ENCODE measurements at regions of chr6 and their contacts with region 1.

Region 1: DNA sequence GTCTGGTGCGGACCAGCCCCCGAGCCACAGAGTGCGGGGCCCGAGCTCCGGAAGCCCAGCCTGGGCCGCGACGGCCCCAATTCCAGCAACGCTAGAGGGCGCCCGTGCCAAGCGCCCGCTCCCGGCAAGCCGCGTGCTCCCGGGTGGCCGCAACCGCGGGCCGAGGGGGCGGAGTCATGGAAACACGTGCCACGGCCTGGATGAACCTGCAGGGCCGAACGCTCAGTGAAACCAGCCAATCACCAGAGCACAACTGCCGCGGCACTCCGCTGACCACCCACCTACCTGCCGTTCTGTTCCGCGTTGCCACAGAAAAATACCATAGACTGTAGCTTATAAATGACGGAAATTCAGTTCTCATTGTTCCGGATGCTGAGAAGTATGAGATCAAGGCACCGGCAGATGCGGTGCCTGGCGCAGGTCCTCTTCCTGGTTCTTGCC is 85.7 kb upstream of the FOXC1 start:
- DNase-seq: peak; percentile 58 to 82 (median 75)
- ATAC-seq: peak; percentile 89
- H3K4me3 ChIP-seq: peak overlapping the region; percentile 60
- H3K4me3 Mint-ChIP-seq: peak overlapping the region; percentile 64 to 87 (median 79)
- H3K27ac ChIP-seq: no peak overlapping the region
- H3K27ac Mint-ChIP-seq: peak overlapping the region; percentile 51 to 93 (median 90)
- H3K4me1 ChIP-seq: peaks cover 19 to 50% of the 10 kb centered on the region in 2 donors
- H3K4me1 Mint-ChIP-seq: peaks cover 35 to 58% (median 48%) of the 10 kb centered on the region in 7 donors
- H3K27me3 ChIP-seq: no peaks in the 10 kb centered on the region
- H3K27me3 Mint-ChIP-seq: peaks cover 0 to 16% (median 4%) of the 10 kb centered on the region in 5 donors

Region 2: GRCh38 chr6:1372690-1373089 is 151.4 kb before region 1 on chr6:
- CTCF ChIA-PET with region 1: no interaction called
- POLR2A ChIA-PET with region 1: no interaction called
- intact Hi-C with region 1: no loop called
- DNase-seq: no peak
- ATAC-seq: no peak
- H3K4me3 ChIP-seq: no peak overlapping the region
- H3K4me3 Mint-ChIP-seq: no peak overlapping the region
- H3K27ac ChIP-seq: no peak overlapping the region
- H3K27ac Mint-ChIP-seq: no peak overlapping the region
- H3K4me1 ChIP-seq: no peaks in the 10 kb centered on the region
- H3K4me1 Mint-ChIP-seq: peaks cover 0 to 4% (median 3%) of the 10 kb centered on the region in 7 donors
- H3K27me3 ChIP-seq: no peaks in the 10 kb centered on the region
- H3K27me3 Mint-ChIP-seq: peaks cover 74 to 93% (median 80%) of the 10 kb centered on the region in 5 donors

Region 3: GRCh38 chr6:1482381-1483166 is 41.5 kb before region 1 on chr6:
- CTCF ChIA-PET with region 1: no interaction called
- POLR2A ChIA-PET with region 1: no interaction called
- intact Hi-C with region 1: no loop called
- DNase-seq: no peak
- ATAC-seq: no peak
- H3K4me3 ChIP-seq: no peak overlapping the region
- H3K4me3 Mint-ChIP-seq: no peak overlapping the region
- H3K27ac ChIP-seq: no peak overlapping the region
- H3K27ac Mint-ChIP-seq: no peak overlapping the region
- H3K4me1 ChIP-seq: no peaks in the 10 kb centered on the region
- H3K4me1 Mint-ChIP-seq: no peaks in the 10 kb centered on the region
- H3K27me3 ChIP-seq: no peaks in the 10 kb centered on the region
- H3K27me3 Mint-ChIP-seq: peaks cover 0 to 20% (median 11%) of the 10 kb centered on the region in 5 donors

Region 4: DNA sequence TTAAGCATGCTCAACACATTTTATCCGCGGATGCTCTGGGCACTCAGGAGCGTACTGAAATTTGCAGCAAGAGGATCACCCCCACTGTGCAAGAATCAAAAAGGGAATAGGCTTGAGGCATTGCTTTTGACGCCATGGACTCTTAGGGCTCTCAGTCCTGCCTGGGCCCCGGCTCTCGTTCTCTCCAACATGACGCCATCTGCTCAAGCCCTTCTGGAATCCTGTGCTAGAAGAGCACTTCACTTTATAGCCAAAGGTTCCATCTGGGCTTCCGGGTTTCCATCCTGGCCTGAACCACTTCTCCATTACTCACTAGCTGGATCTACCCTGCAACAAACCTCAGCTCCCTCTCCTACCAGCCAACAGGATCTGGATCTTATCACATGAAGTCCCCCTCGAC is 29.4 kb before region 1 on chr6:
- CTCF ChIA-PET with region 1: no interaction called
- POLR2A ChIA-PET with region 1: no interaction called
- intact Hi-C with region 1: loop called in 1 of 2 experiments (anchors 1 kb)
- DNase-seq: no peak
- ATAC-seq: no peak
- H3K4me3 ChIP-seq: no peak overlapping the region
- H3K4me3 Mint-ChIP-seq: no peak overlapping the region
- H3K27ac ChIP-seq: no peak overlapping the region
- H3K27ac Mint-ChIP-seq: no peak overlapping the region
- H3K4me1 ChIP-seq: no peaks in the 10 kb centered on the region
- H3K4me1 Mint-ChIP-seq: no peaks in the 10 kb centered on the region
- H3K27me3 ChIP-seq: no peaks in the 10 kb centered on the region
- H3K27me3 Mint-ChIP-seq: peaks cover 0 to 13% (median 4%) of the 10 kb centered on the region in 5 donors

Region 5: GRCh38 chr6:1535295-1535694 is 11.2 kb after region 1 on chr6:
- CTCF ChIA-PET with region 1: interaction called, 3 read pairs
- POLR2A ChIA-PET with region 1: interaction called, 13 read pairs
- intact Hi-C with region 1: loop called (anchors 1 kb)
- DNase-seq: peak in 5 of 9 donors; percentile 34 to 46 (median 37)
- ATAC-seq: peak; percentile 73
- H3K4me3 ChIP-seq: no peak overlapping the region
- H3K4me3 Mint-ChIP-seq: peak overlapping the region in 8 of 10 donors; percentile 62 to 79 (median 70)
- H3K27ac ChIP-seq: peak overlapping the region; percentile 35
- H3K27ac Mint-ChIP-seq: peak overlapping the region in 5 of 9 donors; percentile 32 to 85 (median 75)
- H3K4me1 ChIP-seq: peaks cover 20 to 25% of the 10 kb centered on the region in 2 donors
- H3K4me1 Mint-ChIP-seq: peaks cover 12 to 45% (median 20%) of the 10 kb centered on the region in 7 donors
- H3K27me3 ChIP-seq: no peaks in the 10 kb centered on the region
- H3K27me3 Mint-ChIP-seq: no peaks in the 10 kb centered on the region

Region 6: GRCh38 chr6:1554476-1555310 is 30.6 kb after region 1 on chr6:
- CTCF ChIA-PET with region 1: interaction called, 50 read pairs
- POLR2A ChIA-PET with region 1: interaction called, 5 read pairs
- intact Hi-C with region 1: loop called (anchors 1 kb)
- DNase-seq: peak; percentile 45 to 81 (median 73)
- ATAC-seq: peak; percentile 94
- H3K4me3 ChIP-seq: peak overlapping the region; percentile 64
- H3K4me3 Mint-ChIP-seq: peak overlapping the region; percentile 76 to 93 (median 86)
- H3K27ac ChIP-seq: peak overlapping the region; percentile 36
- H3K27ac Mint-ChIP-seq: peak overlapping the region; percentile 47 to 96 (median 72)
- H3K4me1 ChIP-seq: peaks cover 4 to 7% of the 10 kb centered on the region in 2 donors
- H3K4me1 Mint-ChIP-seq: peaks cover 8 to 54% (median 25%) of the 10 kb centered on the region in 7 donors
- H3K27me3 ChIP-seq: no peaks in the 10 kb centered on the region
- H3K27me3 Mint-ChIP-seq: peaks cover 0 to 41% (median 6%) of the 10 kb centered on the region in 5 donors

Region 7: GRCh38 chr6:1596088-1596852 is 72.2 kb after region 1 on chr6:
- CTCF ChIA-PET with region 1: interaction called, 9 read pairs
- POLR2A ChIA-PET with region 1: interaction called, 3 read pairs
- intact Hi-C with region 1: loop called in 1 of 2 experiments (anchors 1 kb)
- DNase-seq: peak in 8 of 9 donors; percentile 45 to 76 (median 63)
- ATAC-seq: peak; percentile 90
- H3K4me3 ChIP-seq: no peak overlapping the region
- H3K4me3 Mint-ChIP-seq: peak overlapping the region in 6 of 10 donors; percentile 7 to 42 (median 30)
- H3K27ac ChIP-seq: no peak overlapping the region
- H3K27ac Mint-ChIP-seq: peak overlapping the region in 1 of 9 donors; percentile 28
- H3K4me1 ChIP-seq: peaks cover 0 to 4% of the 10 kb centered on the region in 2 donors
- H3K4me1 Mint-ChIP-seq: peaks cover 4 to 9% (median 7%) of the 10 kb centered on the region in 7 donors
- H3K27me3 ChIP-seq: peaks cover 0 to 4% of the 10 kb centered on the region in 2 donors
- H3K27me3 Mint-ChIP-seq: peaks cover 59 to 68% (median 60%) of the 10 kb centered on the region in 5 donors